ENCODE measurements at regions of chr21 and their contacts with region 1.

Region 1: GRCh38 chr21:36330904-36331303 is 10.9 kb downstream of the MORC3 start:
- DNase-seq: peak; percentile 50 to 70 (median 58)
- H3K4me3 ChIP-seq: no peak overlapping the region
- H3K4me3 Mint-ChIP-seq: no peak overlapping the region
- H3K27ac ChIP-seq: peak overlapping the region in 1 of 2 donors; percentile 60
- H3K27ac Mint-ChIP-seq: peak overlapping the region; percentile 16 to 87 (median 76)
- H3K4me1 ChIP-seq: peaks cover 7 to 18% of the 10 kb centered on the region in 2 donors
- H3K4me1 Mint-ChIP-seq: peaks cover 26% of the 10 kb centered on the region
- H3K27me3 ChIP-seq: no peaks in the 10 kb centered on the region
- H3K27me3 Mint-ChIP-seq: peaks cover 0 to 1% (median 0%) of the 10 kb centered on the region in 3 donors
- CTCF ChIP-seq: peak; percentile 80

Region 2: GRCh38 chr21:36141513-36141925 is 189.4 kb before region 1 on chr21:
- intact Hi-C with region 1: loop called in 1 of 2 experiments (anchors 5 kb)
- DNase-seq: peak; percentile 65 to 91 (median 80)
- H3K4me3 ChIP-seq: no peak overlapping the region
- H3K4me3 Mint-ChIP-seq: no peak overlapping the region
- H3K27ac ChIP-seq: no peak overlapping the region
- H3K27ac Mint-ChIP-seq: peak overlapping the region in 3 of 7 donors; percentile 25 to 57 (median 25)
- H3K4me1 ChIP-seq: peaks cover 1 to 3% of the 10 kb centered on the region in 2 donors
- H3K4me1 Mint-ChIP-seq: peaks cover 9% of the 10 kb centered on the region
- H3K27me3 ChIP-seq: no peaks in the 10 kb centered on the region
- H3K27me3 Mint-ChIP-seq: no peaks in the 10 kb centered on the region
- CTCF ChIP-seq: peak; percentile 95

Region 3: DNA sequence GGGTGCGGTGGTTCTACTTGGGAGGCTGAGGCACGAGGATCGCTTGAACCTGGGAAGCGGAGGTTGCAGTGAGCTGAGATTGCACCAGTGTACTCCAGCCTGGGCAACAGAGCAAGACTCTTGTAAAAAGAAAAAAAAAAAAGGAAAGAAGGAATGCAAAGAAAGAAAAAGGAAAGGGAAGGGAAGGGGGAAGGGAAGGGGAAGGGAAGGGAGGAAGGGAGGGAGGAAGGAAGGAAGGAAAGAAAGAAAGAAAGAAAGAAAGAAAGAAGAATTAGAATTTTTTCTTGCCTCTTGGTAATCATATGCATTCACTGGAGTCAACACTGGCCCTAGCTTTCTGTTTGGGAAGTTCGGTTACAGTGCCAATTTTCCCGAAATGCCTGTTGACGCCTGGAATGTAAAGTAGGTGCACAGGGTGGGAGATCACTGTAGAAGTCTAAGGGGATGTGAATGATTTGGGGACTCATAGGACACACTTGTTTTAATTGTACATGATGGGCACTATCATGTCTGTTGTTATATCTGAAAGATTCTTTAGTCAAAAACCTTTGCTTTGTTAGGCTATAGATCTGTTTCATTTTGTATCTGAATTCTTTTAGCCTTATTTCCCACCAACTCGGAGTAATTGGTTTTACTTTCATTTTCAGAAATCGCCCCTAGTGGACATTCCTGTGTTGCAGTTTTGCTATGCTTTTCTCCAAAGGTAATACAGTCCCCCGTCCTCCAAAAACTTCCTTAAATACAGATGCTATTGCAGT is 70.7 kb before region 1 on chr21:
- intact Hi-C with region 1: loop called in 1 of 2 experiments (anchors 5 kb)
- DNase-seq: peak; percentile 40 to 67 (median 53)
- H3K4me3 ChIP-seq: peak overlapping the region; percentile 43 to 85 (median 73)
- H3K4me3 Mint-ChIP-seq: peak overlapping the region; percentile 66 to 83
- H3K27ac ChIP-seq: peak overlapping the region in 1 of 2 donors; percentile 80
- H3K27ac Mint-ChIP-seq: peak overlapping the region; percentile 79 to 90 (median 87)
- H3K4me1 ChIP-seq: peaks cover 5 to 10% of the 10 kb centered on the region in 2 donors
- H3K4me1 Mint-ChIP-seq: peaks cover 10% of the 10 kb centered on the region
- H3K27me3 ChIP-seq: no peaks in the 10 kb centered on the region
- H3K27me3 Mint-ChIP-seq: peaks cover 0 to 2% (median 0%) of the 10 kb centered on the region in 3 donors
- CTCF ChIP-seq: peak; percentile 84

Region 4: DNA sequence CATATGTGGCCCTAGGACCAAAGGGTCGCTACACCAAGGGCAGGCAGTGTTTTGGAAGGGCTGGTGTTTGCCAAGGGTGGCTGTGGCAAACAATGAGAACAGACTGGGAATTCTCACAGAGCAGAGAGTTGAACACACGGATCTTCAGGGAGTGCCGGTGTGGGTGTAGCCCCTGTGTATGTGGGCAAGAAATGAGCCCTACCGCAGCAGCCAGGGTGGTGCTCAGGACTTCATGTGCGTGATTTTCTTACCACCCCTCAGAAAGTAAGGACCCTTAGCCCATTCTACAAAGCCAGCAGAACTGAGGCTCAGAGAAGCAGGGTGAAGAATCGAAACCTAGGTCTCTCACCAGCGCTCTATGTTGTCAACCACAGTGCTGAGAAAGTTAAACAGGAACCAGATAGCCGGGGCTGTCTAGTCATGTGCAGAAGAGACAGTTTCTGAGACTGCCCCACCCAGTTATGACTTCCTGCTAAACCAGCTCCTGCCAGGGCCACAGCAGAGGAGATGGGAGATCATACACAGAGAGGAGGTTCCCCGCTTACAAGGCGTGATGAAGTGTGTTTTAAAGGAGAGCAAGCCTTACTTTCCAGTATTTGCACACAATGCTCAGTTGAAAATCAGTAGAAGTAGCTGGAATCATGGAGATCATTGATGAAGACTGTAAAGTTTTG is 32.8 kb before region 1 on chr21:
- intact Hi-C with region 1: loop called (anchors 5 kb)
- DNase-seq: peak; percentile 87 to 96 (median 88)
- H3K4me3 ChIP-seq: peak overlapping the region; percentile 7 to 73 (median 21)
- H3K4me3 Mint-ChIP-seq: peak overlapping the region; percentile 78 to 87
- H3K27ac ChIP-seq: peak overlapping the region; percentile 87 to 99
- H3K27ac Mint-ChIP-seq: peak overlapping the region; percentile 95 to 98 (median 97)
- H3K4me1 ChIP-seq: peaks cover 27% of the 10 kb centered on the region in 2 donors
- H3K4me1 Mint-ChIP-seq: peaks cover 27% of the 10 kb centered on the region
- H3K27me3 ChIP-seq: no peaks in the 10 kb centered on the region
- H3K27me3 Mint-ChIP-seq: peaks cover 0 to 3% (median 0%) of the 10 kb centered on the region in 3 donors
- CTCF ChIP-seq: no peak